Activated CD4-positive, alpha-beta T cell treated with anti-CD3 and anti-CD28 coated beads, Interleukin-2, amount 10 ng/mL, durations not matched to agents 24 days and 14 days (primary cell): ENCODE measurements at regions of chr12 and their contacts with region 1.

Region 1: GRCh38 chr12:94305130-94305957 is 154.3 kb downstream of the CEP83 start:
- DNase-seq: peak; percentile 92
- H3K4me3 Mint-ChIP-seq: peak overlapping the region; percentile 60
- H3K27ac Mint-ChIP-seq: peak overlapping the region; percentile 82
- H3K4me1 Mint-ChIP-seq: peaks cover 47% of the 10 kb centered on the region
- H3K27me3 Mint-ChIP-seq: no peaks in the 10 kb centered on the region

Region 2: DNA sequence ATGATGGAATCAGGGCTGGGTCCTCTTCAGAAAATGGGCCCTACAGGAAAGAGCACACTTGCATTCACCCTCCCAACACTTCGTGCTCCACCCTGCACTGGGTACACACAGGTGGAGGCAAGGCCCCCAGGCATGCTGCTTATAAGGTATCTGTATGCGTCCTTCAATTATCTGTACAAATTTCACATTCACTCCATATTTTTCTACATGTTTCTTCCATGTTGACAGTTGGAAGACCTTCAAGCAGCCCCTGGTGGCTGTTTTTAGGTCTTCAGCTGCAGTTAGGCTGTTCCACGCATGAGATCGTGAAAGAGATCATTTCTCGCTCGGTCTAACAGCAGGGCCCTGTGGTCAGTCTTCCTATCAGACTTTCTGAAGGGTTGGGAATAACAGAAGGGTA is 109.9 kb before region 1 on chr12:
- intact Hi-C with region 1: no loop called
- DNase-seq: no peak
- H3K4me3 Mint-ChIP-seq: no peak overlapping the region
- H3K27ac Mint-ChIP-seq: no peak overlapping the region
- H3K4me1 Mint-ChIP-seq: peaks cover 12% of the 10 kb centered on the region
- H3K27me3 Mint-ChIP-seq: no peaks in the 10 kb centered on the region

Region 3: DNA sequence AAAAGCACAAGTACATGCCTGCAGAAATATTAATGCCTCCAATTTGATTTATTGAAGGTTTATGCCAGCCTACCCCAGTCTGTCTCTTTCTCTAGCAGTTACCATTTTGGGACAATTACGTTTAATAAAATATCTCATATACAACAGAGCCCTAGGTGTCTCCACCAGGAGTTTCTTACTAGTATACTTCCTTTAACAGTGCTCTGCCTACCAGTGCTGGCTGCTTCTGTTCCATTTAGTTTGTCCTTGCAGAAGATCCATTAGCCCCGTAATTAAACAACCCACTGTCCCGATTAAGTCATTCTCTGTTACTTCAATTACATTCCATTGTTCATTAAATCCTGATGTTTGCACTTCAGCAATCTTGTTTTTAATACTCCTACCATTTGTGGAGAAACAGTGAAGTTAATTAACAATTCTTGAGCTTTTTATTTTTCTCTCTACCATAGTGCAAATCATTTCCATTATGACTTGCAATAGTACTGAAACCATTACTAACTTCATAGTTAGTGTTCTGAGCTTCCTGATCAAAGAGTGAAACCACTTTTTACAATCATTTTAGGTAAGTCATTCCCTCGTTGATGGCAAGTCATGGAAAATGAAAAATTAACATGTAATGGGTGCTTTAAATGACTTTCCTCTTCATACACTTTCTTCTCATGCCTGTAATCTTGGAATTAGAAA is 35.9 kb before region 1 on chr12:
- intact Hi-C with region 1: loop called (anchors 1 kb)
- DNase-seq: no peak
- H3K4me3 Mint-ChIP-seq: peak overlapping the region; percentile 6
- H3K27ac Mint-ChIP-seq: peak overlapping the region; percentile 65
- H3K4me1 Mint-ChIP-seq: peaks cover 45% of the 10 kb centered on the region
- H3K27me3 Mint-ChIP-seq: no peaks in the 10 kb centered on the region

Region 4: GRCh38 chr12:94326727-94327126 is 21.4 kb after region 1 on chr12:
- intact Hi-C with region 1: loop called (anchors 1 kb)
- DNase-seq: no peak
- H3K4me3 Mint-ChIP-seq: no peak overlapping the region
- H3K27ac Mint-ChIP-seq: peak overlapping the region; percentile 65
- H3K4me1 Mint-ChIP-seq: peaks cover 24% of the 10 kb centered on the region
- H3K27me3 Mint-ChIP-seq: no peaks in the 10 kb centered on the region

Region 5: DNA sequence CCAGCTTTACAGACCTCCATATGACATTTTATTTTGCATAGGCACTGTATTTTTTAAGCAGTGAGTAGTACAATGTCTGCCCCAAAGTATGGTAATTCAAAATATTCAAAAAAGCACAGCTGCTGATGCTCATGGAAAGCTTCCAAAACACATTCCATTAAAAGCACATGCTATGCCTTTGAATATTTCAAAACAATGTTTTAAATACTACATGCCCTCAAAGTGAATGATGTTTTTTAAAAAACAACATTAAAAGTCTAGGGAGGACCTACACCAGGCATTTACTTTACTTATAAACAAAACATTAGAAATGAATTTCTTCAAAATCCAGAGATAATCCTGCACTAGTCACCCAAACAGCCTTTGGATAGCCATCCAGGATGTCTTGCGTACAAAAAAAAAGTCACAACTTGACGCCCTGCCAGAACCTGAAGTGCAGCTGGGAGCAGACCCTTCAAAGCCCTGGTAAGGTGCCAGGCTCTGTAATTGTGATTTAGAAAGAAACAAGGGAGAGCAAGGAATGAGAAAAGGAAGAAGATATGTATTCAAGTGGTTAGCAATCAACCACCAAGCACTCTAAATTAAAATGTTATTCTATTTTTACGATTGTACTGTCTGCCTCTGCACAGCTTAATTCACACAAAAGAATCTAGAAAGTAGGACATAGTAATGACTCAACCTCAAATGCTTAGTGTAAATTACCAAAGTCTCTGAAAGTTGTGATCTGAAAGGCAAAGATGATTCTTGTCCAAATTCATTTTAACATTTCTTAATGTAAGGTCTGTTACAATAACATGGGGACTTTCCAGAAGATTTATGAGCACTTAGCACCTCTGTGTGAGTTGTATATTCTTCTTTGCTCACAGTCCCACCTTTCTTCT is 122.4 kb after region 1 on chr12:
- intact Hi-C with region 1: loop called (anchors 2 kb)
- DNase-seq: no peak
- H3K4me3 Mint-ChIP-seq: no peak overlapping the region
- H3K27ac Mint-ChIP-seq: peak overlapping the region; percentile 68
- H3K4me1 Mint-ChIP-seq: peaks cover 7% of the 10 kb centered on the region
- H3K27me3 Mint-ChIP-seq: no peaks in the 10 kb centered on the region

Region 6: DNA sequence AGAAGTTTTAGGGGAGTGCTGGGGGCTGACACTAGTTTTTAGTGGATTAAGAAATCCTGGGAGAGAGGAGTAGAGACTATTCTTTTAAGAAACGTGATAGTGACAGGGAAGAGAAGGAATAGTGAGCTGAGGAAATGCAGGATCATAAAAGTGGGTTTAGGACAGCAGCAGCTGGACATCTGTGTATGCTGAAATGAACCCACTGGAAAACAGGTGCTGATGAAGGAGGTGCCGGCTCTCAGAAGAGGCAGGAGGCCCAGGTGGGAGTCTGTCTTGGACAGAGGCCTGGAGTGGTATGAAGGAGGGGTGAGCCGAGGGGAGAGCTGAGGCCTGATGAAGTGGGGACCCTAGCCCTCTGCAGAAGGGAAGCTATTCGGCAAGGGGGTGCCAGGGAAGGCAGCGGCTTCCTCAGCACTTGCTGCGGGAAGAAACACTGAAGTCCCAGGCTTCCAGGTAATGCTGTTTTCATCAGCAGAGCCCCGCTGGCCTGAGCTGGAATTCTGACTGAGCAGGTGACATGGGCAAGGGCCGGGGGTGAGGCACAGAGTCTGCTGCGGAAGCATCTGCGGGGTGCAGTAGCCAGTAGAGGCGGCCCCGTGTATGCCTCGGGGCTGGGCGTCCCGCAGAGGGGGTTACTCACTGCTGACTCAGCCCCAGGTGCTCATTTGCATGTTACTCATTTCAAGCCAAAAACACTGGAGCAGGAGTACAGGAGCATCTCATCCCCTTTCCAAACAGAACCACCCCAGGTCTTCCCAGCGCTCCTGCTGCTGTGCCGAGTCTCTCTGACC is 255.3 kb after region 1 on chr12:
- intact Hi-C with region 1: no loop called
- DNase-seq: no peak
- H3K4me3 Mint-ChIP-seq: no peak overlapping the region
- H3K27ac Mint-ChIP-seq: no peak overlapping the region
- H3K4me1 Mint-ChIP-seq: peaks cover 2% of the 10 kb centered on the region
- H3K27me3 Mint-ChIP-seq: peaks cover 29% of the 10 kb centered on the region